Activated CD8-positive, alpha-beta T cell treated with anti-CD3 and anti-CD28 coated beads, Interleukin-2, amount 10 ng/mL, durations not matched to agents 7 days and 5 days (primary cell): ENCODE measurements at regions of chr2 and their contacts with region 1.

Region 1: GRCh38 chr2:85661139-85661858 is 6.7 kb downstream of the SFTPB start:
- DNase-seq: no peak
- ATAC-seq: no peak
- H3K4me3 Mint-ChIP-seq: no peak overlapping the region
- H3K27ac Mint-ChIP-seq: no peak overlapping the region
- H3K4me1 Mint-ChIP-seq: peaks cover 14% of the 10 kb centered on the region
- H3K27me3 Mint-ChIP-seq: no peaks in the 10 kb centered on the region

Region 2: DNA sequence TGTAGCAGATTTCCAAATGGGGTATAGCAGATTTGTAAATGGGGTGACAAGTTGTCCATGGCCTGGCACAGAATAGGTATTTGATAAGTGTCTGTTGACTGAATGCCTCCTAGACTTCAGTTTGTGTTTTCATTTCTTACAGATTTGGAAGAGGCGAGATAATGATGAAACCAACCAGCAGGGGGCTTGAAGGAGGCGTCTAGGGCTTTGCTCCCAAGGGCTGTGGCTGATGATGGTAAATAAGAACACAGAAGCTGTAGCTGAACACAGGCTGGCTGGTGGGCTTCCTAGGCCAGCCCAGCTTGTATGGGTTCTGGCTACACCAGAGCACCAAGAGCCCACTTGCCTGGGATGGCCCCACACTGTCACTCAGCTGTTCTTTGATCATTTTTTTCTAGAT is 12.7 kb before region 1 on chr2:
- CTCF ChIA-PET with region 1: interaction called, 19 read pairs
- POLR2A ChIA-PET with region 1: no interaction called
- DNase-seq: peak; percentile 51
- ATAC-seq: peak; percentile 75
- H3K4me3 Mint-ChIP-seq: no peak overlapping the region
- H3K27ac Mint-ChIP-seq: no peak overlapping the region
- H3K4me1 Mint-ChIP-seq: no peaks in the 10 kb centered on the region
- H3K27me3 Mint-ChIP-seq: no peaks in the 10 kb centered on the region

Region 3: GRCh38 chr2:85741833-85742455 is 80.6 kb after region 1 on chr2:
- CTCF ChIA-PET with region 1: no interaction called
- POLR2A ChIA-PET with region 1: no interaction called
- DNase-seq: no peak
- ATAC-seq: no peak
- H3K4me3 Mint-ChIP-seq: no peak overlapping the region
- H3K27ac Mint-ChIP-seq: no peak overlapping the region
- H3K4me1 Mint-ChIP-seq: no peaks in the 10 kb centered on the region
- H3K27me3 Mint-ChIP-seq: peaks cover 62% of the 10 kb centered on the region